ENCODE measurements at regions of chr11 and their contacts with region 1.

Region 1: DNA sequence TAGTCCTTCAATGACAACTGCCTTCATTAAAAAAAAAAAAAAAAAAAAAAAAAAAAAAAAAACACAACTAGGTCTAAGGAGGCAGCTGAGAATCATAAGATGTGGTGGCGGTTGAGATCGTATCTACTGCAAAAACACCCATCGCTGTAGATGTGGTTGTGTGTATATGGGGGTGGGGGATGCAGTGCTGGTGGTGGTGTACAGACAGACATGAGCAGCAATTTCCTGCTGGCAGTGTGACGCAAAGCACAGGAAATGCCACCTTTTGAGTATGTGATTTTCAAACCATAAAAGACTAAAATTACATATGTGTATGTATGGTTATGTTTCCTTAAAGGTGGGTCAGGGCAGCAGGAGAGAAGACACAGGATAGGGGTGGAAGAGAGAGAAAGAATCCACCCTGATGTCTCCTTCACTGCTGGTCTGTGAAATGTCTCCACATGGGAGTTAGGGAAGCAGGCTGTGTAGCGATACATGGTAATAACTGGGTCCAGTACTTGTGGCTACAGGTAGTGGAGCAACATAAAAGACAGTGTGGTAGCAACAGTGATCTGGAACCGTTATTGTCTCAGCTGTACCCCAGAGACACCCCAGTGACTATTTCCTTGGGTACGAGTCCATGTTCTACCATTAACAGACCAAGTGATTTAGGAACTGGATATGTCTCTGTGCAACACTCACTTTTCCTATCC is 57.9 kb downstream of the SYTL2 start:
- DNase-seq: peak; percentile 44 to 99 (median 99)
- ATAC-seq: peak; percentile 95
- H3K4me3 ChIP-seq: peak overlapping the region; percentile 54
- H3K4me3 Mint-ChIP-seq: peak overlapping the region; percentile 75 to 91 (median 84)
- H3K27ac ChIP-seq: peak overlapping the region; percentile 70
- H3K27ac Mint-ChIP-seq: peak overlapping the region; percentile 90 to 99 (median 98)
- H3K4me1 ChIP-seq: peaks cover 80 to 82% of the 10 kb centered on the region in 2 donors
- H3K4me1 Mint-ChIP-seq: peaks cover 64 to 100% (median 98%) of the 10 kb centered on the region in 7 donors
- H3K27me3 ChIP-seq: no peaks in the 10 kb centered on the region
- H3K27me3 Mint-ChIP-seq: no peaks in the 10 kb centered on the region

Region 2: DNA sequence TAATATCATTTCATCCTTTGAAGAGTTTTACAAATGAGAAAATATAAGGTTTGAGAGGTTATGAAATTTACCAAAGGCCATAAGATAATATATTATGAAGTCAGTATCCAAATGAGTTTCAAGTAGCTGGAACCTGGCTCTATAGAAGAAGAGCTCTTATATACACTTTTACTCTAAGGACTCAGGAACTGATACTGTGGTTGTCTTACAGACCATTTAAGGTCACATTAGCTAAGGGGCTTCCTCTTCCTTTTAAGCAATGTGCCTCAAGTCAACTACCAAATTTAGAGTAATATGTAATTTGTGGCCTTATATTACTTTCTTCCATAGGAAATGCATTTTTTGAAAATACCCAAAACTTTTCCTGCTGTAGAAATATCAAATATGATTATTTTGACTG is 495.2 kb before region 1 on chr11:
- CTCF ChIA-PET with region 1: no interaction called
- POLR2A ChIA-PET with region 1: no interaction called
- intact Hi-C with region 1: no loop called
- DNase-seq: no peak
- ATAC-seq: no peak
- H3K4me3 ChIP-seq: no peak overlapping the region
- H3K4me3 Mint-ChIP-seq: no peak overlapping the region
- H3K27ac ChIP-seq: no peak overlapping the region
- H3K27ac Mint-ChIP-seq: no peak overlapping the region
- H3K4me1 ChIP-seq: no peaks in the 10 kb centered on the region
- H3K4me1 Mint-ChIP-seq: no peaks in the 10 kb centered on the region
- H3K27me3 ChIP-seq: no peaks in the 10 kb centered on the region
- H3K27me3 Mint-ChIP-seq: no peaks in the 10 kb centered on the region

Region 3: DNA sequence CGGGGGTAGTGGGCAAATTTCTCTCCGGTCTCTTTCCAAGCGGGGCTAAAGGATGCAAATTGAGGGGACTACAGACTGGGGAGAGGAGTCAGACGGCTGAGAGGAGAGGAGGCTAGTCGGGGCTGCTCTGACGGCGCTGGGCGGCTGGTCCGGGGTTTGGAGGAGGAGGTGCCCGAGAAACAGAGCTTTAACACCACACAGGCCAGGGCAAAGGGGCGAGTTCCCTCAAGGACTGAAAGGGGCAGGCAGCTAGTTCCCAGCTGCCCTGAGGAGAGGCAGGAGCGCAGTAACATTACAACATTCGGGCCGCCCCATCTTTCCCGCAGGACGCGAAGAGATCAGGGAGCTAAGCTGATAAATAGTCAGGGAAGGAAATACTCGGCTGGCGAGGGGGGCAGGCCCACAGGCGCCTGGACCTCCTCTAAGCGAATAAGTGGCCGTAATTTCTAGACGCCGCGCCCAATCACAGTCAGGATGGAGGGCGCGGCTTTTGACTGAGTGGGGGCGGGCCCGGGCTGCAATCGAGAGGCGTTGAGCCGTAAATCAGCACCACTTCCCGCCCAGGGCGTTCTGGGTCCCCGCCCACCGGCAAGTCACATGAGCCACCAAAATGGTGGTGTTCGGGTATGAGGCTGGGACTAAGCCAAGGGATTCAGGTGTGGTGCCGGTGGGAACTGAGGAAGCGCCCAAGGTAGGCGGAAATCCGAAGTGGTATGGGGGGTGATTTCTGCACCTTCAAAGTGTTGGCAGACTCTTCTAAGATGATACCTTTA is 124.9 kb before region 1 on chr11 and contains the start of gene TMEM126B:
- CTCF ChIA-PET with region 1: no interaction called
- POLR2A ChIA-PET with region 1: interaction called, 4 read pairs
- intact Hi-C with region 1: loop called (anchors 1 to 2 kb)
- DNase-seq: peak; percentile 85 to 95 (median 94)
- ATAC-seq: peak; percentile 99
- H3K4me3 ChIP-seq: peak within 1 kb of the TSS; percentile 98
- H3K4me3 Mint-ChIP-seq: peak within 1 kb of the TSS; percentile 84 to 98 (median 94)
- H3K27ac ChIP-seq: peak within 1 kb of the TSS; percentile 85
- H3K27ac Mint-ChIP-seq: peak within 1 kb of the TSS; percentile 89 to 97 (median 94)
- H3K4me1 ChIP-seq: peaks cover 13 to 22% of the 10 kb centered on the region in 2 donors
- H3K4me1 Mint-ChIP-seq: peaks cover 17 to 67% (median 48%) of the 10 kb centered on the region in 7 donors
- H3K27me3 ChIP-seq: no peaks in the 10 kb centered on the region
- H3K27me3 Mint-ChIP-seq: peaks cover 0 to 9% (median 0%) of the 10 kb centered on the region in 5 donors
- total RNA-seq, gene TMEM126B: 22.1 to 50.4 (median 36.4) TPM

Region 4: GRCh38 chr11:85694386-85694980 is 58.6 kb before region 1 on chr11:
- CTCF ChIA-PET with region 1: no interaction called
- POLR2A ChIA-PET with region 1: interaction called, 12 read pairs
- intact Hi-C with region 1: loop called (anchors 1 kb)
- DNase-seq: peak in 7 of 9 donors; percentile 36 to 63 (median 55)
- ATAC-seq: peak; percentile 70
- H3K4me3 ChIP-seq: no peak overlapping the region
- H3K4me3 Mint-ChIP-seq: no peak overlapping the region
- H3K27ac ChIP-seq: no peak overlapping the region
- H3K27ac Mint-ChIP-seq: peak overlapping the region in 1 of 9 donors; percentile 12
- H3K4me1 ChIP-seq: peaks cover 2 to 7% of the 10 kb centered on the region in 2 donors
- H3K4me1 Mint-ChIP-seq: peaks cover 2 to 52% (median 8%) of the 10 kb centered on the region in 7 donors
- H3K27me3 ChIP-seq: no peaks in the 10 kb centered on the region
- H3K27me3 Mint-ChIP-seq: peaks cover 0 to 3% (median 0%) of the 10 kb centered on the region in 5 donors

Region 5: GRCh38 chr11:85737748-85738147 is 15.3 kb before region 1 on chr11:
- CTCF ChIA-PET with region 1: interaction called, 5 read pairs
- POLR2A ChIA-PET with region 1: interaction called, 6 read pairs
- intact Hi-C with region 1: loop called (anchors 1 to 2 kb)
- DNase-seq: no peak
- ATAC-seq: no peak
- H3K4me3 ChIP-seq: no peak overlapping the region
- H3K4me3 Mint-ChIP-seq: peak overlapping the region in 3 of 10 donors; percentile 6 to 50 (median 37)
- H3K27ac ChIP-seq: no peak overlapping the region
- H3K27ac Mint-ChIP-seq: peak overlapping the region in 3 of 9 donors; percentile 48 to 70 (median 62)
- H3K4me1 ChIP-seq: peaks cover 14 to 36% of the 10 kb centered on the region in 2 donors
- H3K4me1 Mint-ChIP-seq: peaks cover 18 to 67% (median 34%) of the 10 kb centered on the region in 7 donors
- H3K27me3 ChIP-seq: no peaks in the 10 kb centered on the region
- H3K27me3 Mint-ChIP-seq: no peaks in the 10 kb centered on the region

Region 6: DNA sequence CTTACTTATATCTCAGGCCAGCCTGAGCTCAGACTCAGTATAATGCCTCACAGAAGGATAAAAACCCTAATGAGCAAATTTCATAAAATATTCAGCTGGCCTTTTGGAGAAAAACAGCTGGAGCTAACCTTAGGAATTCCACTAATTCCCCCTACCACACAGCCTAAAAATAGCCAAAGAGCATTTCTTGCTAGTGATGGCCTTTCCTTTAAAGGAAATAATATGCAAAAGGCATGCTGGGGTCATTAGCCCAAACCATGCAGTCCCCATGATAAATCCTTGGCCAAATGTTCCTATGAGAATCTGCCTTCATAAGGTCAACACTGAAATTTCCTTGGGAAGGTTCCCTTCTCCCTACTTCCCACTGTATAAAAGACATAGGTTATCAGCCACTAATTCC is 19.7 kb after region 1 on chr11:
- CTCF ChIA-PET with region 1: interaction called, 3 read pairs
- POLR2A ChIA-PET with region 1: interaction called, 7 read pairs
- intact Hi-C with region 1: loop called (anchors 1 to 2 kb)
- DNase-seq: no peak
- ATAC-seq: no peak
- H3K4me3 ChIP-seq: no peak overlapping the region
- H3K4me3 Mint-ChIP-seq: no peak overlapping the region
- H3K27ac ChIP-seq: no peak overlapping the region
- H3K27ac Mint-ChIP-seq: peak overlapping the region in 1 of 9 donors; percentile 26
- H3K4me1 ChIP-seq: peaks cover 6 to 11% of the 10 kb centered on the region in 2 donors
- H3K4me1 Mint-ChIP-seq: peaks cover 26 to 75% (median 56%) of the 10 kb centered on the region in 7 donors
- H3K27me3 ChIP-seq: no peaks in the 10 kb centered on the region
- H3K27me3 Mint-ChIP-seq: no peaks in the 10 kb centered on the region

Region 7: GRCh38 chr11:85826116-85826855 is 73.2 kb after region 1 on chr11:
- CTCF ChIA-PET with region 1: interaction called, 3 read pairs
- POLR2A ChIA-PET with region 1: interaction called, 20 read pairs
- intact Hi-C with region 1: loop called (anchors 1 kb)
- DNase-seq: peak in 3 of 9 donors; percentile 24 to 39 (median 28)
- ATAC-seq: no peak
- H3K4me3 ChIP-seq: no peak overlapping the region
- H3K4me3 Mint-ChIP-seq: peak overlapping the region in 9 of 10 donors; percentile 11 to 65 (median 40)
- H3K27ac ChIP-seq: no peak overlapping the region
- H3K27ac Mint-ChIP-seq: peak overlapping the region; percentile 59 to 100 (median 93)
- H3K4me1 ChIP-seq: peaks cover 55 to 57% of the 10 kb centered on the region in 2 donors
- H3K4me1 Mint-ChIP-seq: peaks cover 28 to 72% (median 64%) of the 10 kb centered on the region in 7 donors
- H3K27me3 ChIP-seq: no peaks in the 10 kb centered on the region
- H3K27me3 Mint-ChIP-seq: no peaks in the 10 kb centered on the region

Region 8: GRCh38 chr11:85875142-85875922 is 122.3 kb after region 1 on chr11:
- CTCF ChIA-PET with region 1: no interaction called
- POLR2A ChIA-PET with region 1: no interaction called
- intact Hi-C with region 1: no loop called
- DNase-seq: no peak
- ATAC-seq: no peak
- H3K4me3 ChIP-seq: no peak overlapping the region
- H3K4me3 Mint-ChIP-seq: no peak overlapping the region
- H3K27ac ChIP-seq: no peak overlapping the region
- H3K27ac Mint-ChIP-seq: no peak overlapping the region
- H3K4me1 ChIP-seq: no peaks in the 10 kb centered on the region
- H3K4me1 Mint-ChIP-seq: no peaks in the 10 kb centered on the region
- H3K27me3 ChIP-seq: no peaks in the 10 kb centered on the region
- H3K27me3 Mint-ChIP-seq: peaks cover 0 to 4% (median 0%) of the 10 kb centered on the region in 5 donors

Region 9: GRCh38 chr11:86302100-86302793 is 549.2 kb after region 1 on chr11 and contains the start of gene HIKESHI:
- CTCF ChIA-PET with region 1: no interaction called
- POLR2A ChIA-PET with region 1: no interaction called
- intact Hi-C with region 1: loop called (anchors 1 to 5 kb)
- DNase-seq: peak; percentile 70 to 92 (median 81)
- ATAC-seq: peak; percentile 100
- H3K4me3 ChIP-seq: peak within 1 kb of the TSS; percentile 96
- H3K4me3 Mint-ChIP-seq: peak within 1 kb of the TSS; percentile 95 to 100 (median 100)
- H3K27ac ChIP-seq: peak within 1 kb of the TSS; percentile 86
- H3K27ac Mint-ChIP-seq: peak within 1 kb of the TSS; percentile 92 to 100 (median 97)
- H3K4me1 ChIP-seq: peaks cover 10 to 13% of the 10 kb centered on the region in 2 donors
- H3K4me1 Mint-ChIP-seq: peaks cover 4 to 37% (median 32%) of the 10 kb centered on the region in 7 donors
- H3K27me3 ChIP-seq: no peaks in the 10 kb centered on the region
- H3K27me3 Mint-ChIP-seq: peaks cover 0 to 8% (median 0%) of the 10 kb centered on the region in 5 donors
- total RNA-seq, gene HIKESHI: 16.7 to 38.4 (median 29.5) TPM